GM13976 (cell line): ENCODE measurements at regions of chr14 and their contacts with region 1.

Region 1: DNA sequence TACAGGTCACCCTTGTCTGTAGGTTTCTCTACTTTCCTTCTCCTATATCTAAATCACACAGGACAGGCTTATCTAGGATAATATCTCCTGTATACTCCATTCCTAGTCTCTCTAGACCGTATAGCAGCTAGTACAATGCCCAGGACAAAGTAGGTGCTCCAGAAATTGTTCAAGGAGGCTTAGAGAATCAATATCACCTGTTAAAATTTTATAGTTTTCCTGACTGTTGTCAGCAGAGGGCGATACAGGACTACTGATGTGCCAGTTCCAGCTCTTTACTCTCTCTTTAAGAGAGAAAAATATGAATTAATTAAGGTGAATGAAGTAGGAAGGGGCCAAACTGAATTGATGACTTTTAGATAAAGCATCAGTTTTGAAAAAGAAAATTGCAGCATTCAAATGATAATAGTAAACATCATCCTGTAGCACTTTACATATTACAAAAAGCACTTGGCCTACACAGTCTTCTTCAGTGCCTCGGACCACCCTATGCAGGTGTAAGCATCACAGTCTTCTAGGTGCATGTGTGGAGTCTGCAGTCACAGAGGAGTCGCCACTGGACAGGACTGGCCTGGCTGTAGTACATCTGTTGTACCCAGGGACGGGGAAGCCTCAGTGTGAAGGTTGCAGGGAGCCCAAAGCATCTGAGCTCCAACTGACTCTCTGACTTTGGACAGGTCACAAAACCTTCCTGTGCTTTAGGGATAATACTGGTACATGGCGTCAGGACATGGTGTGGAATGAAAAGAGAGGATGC is 61.9 kb upstream of the MAX start:
- DNase-seq: peak; percentile 61
- CTCF ChIP-seq: peak; percentile 28

Region 2: GRCh38 chr14:64997108-64997794 is 167.0 kb before region 1 on chr14:
- in situ Hi-C with region 1: loop called (anchors 10 kb)
- DNase-seq: no peak
- CTCF ChIP-seq: no peak

Region 3: GRCh38 chr14:65421201-65421981 is 257.1 kb after region 1 on chr14:
- in situ Hi-C with region 1: loop called (anchors 10 kb)
- DNase-seq: no peak
- CTCF ChIP-seq: no peak

Region 4: GRCh38 chr14:65824285-65824977 is 660.2 kb after region 1 on chr14:
- in situ Hi-C with region 1: loop called (anchors 10 kb)
- DNase-seq: peak; percentile 75
- CTCF ChIP-seq: peak; percentile 86

Region 5: DNA sequence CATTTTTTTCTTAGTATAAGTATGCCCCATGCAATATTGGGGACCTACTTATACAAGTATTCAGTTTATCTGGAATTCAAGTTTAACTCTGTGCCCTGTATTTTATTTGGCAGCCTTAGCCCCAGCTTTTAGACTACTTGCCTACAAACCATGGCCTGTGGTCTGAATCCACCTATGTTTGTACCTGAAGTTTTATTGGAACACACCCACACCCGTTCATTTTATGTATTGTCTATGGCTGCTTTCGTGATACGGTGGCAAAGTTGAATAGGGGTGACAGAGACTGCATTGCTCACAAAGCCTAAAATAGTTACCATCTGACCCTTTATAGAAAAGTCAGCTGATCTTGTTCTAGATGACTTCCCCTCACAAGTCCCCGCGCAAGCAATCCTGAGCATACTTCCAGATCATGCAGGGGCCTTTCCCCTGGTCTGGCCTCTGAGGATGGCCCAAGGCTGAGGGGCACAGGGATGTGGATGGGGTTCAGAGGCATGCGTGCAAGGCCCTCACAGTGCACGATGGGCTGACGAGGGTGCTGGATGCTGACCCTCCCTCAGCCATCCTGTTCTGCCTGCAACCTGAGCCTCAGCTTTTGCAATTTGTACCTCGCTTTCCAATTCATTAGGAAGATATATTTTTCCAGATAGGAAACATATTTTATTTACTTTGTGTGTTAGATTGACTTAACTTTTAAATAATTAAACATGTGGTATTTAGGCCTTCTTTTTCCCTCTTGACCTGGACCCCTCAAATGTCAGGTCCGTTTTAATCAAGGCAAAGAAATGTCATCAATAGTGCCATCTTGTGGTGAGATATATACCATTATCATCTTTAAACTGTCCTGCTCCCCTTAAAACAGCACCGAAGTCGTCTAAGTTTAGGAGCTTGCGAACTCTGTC is 794.7 kb after region 1 on chr14:
- in situ Hi-C with region 1: loop called (anchors 10 kb)
- DNase-seq: peak; percentile 57
- CTCF ChIP-seq: peak; percentile 20

Region 6: GRCh38 chr14:66070509-66071319 is 906.5 kb after region 1 on chr14:
- in situ Hi-C with region 1: loop called (anchors 25 kb)
- DNase-seq: peak; percentile 63
- CTCF ChIP-seq: peak; percentile 67